A549 (cell line): ENCODE measurements at regions of chr22 and their contacts with region 1.

Region 1: DNA sequence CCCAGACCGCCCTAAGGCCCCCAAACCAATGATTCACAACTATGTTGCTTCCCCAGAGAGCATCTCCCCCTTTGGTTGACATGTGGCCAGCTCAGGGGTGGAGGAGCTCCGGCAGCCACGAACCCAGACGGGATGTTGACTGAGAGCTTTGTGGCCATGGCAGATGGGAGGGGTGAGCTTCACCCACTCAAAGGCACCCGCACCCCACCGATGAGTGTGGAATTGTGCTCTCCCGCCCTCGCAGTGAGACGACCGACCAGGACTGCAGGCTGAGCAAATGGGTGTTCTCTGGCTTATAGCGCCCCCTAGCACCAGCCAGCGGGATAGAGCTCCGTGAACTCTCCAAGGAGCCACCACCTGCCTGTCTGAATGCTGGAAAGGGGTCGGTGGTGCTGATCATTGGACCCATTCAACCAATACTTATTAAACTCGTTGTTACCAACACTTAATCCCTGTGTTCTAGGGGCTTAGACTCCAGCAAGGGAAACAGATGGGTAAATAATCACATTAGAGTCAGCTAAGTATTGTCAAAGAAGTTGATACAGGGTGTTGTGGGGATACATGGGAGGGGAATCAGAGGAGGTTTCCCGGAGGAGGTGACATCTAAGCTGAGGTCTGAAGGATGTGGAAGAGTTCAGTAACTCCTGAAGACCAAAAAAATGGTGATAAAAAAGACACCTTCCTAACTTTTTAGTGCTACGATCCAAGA is 4.5 kb upstream of the TIMP3 start:
- DNase-seq: peak; percentile 21 to 35
- ATAC-seq: peak; percentile 62 to 91; a peak in 4 of 6 replicates
- H3K4me3 ChIP-seq: no peak overlapping the region
- H3K27ac ChIP-seq: no peak overlapping the region
- H3K4me1 ChIP-seq: no peaks in the 10 kb centered on the region
- CTCF ChIP-seq: peak; percentile 49
- EP300 ChIP-seq: no peak
- POLR2A ChIP-seq: no peak
- RAD21 ChIP-seq: peak; percentile 73 to 82

Region 2: GRCh38 chr22:32375678-32376450 is 421.2 kb before region 1 on chr22:
- CTCF ChIA-PET with region 1: no interaction called
- POLR2A ChIA-PET with region 1: no interaction called
- DNase-seq: no peak
- ATAC-seq: no peak
- H3K4me3 ChIP-seq: no peak overlapping the region
- H3K27ac ChIP-seq: no peak overlapping the region
- H3K4me1 ChIP-seq: no peaks in the 10 kb centered on the region
- CTCF ChIP-seq: no peak
- EP300 ChIP-seq: no peak
- POLR2A ChIP-seq: no peak
- RAD21 ChIP-seq: no peak

Region 3: DNA sequence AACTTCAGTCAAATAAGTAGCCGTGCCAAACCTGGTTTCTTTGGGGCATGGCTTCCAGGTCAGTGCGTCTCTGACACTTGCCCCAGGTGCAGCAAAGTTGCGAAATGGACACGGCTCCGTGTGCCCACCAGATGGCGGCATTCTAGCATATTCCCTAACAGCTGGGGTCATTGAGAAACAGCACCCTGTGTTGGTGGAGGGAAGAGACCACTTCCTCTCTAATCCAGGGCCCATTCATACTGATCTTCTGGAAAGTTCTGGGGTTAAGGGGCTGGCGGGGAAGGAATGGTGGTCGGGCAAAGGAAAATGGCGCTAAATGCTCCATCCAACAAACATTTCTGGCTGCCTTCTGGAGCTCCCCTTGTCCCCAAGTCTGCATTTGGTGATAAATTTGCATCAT is 136.7 kb before region 1 on chr22:
- CTCF ChIA-PET with region 1: interaction called, 44 read pairs
- POLR2A ChIA-PET with region 1: no interaction called
- DNase-seq: peak; percentile 47 to 49
- ATAC-seq: peak; percentile 71 to 77; a peak in 4 of 6 replicates
- H3K4me3 ChIP-seq: no peak overlapping the region
- H3K27ac ChIP-seq: no peak overlapping the region
- H3K4me1 ChIP-seq: no peaks in the 10 kb centered on the region
- CTCF ChIP-seq: peak; percentile 49
- EP300 ChIP-seq: no peak
- POLR2A ChIP-seq: no peak
- RAD21 ChIP-seq: peak; percentile 64 to 73

Region 4: GRCh38 chr22:32810561-32811004 is 13.6 kb after region 1 on chr22:
- CTCF ChIA-PET with region 1: interaction called, 26 read pairs
- POLR2A ChIA-PET with region 1: no interaction called
- DNase-seq: no peak
- ATAC-seq: no peak
- H3K4me3 ChIP-seq: no peak overlapping the region
- H3K27ac ChIP-seq: no peak overlapping the region
- H3K4me1 ChIP-seq: no peaks in the 10 kb centered on the region
- CTCF ChIP-seq: no peak
- EP300 ChIP-seq: no peak
- POLR2A ChIP-seq: no peak
- RAD21 ChIP-seq: no peak

Region 5: GRCh38 chr22:32852395-32853251 is 55.6 kb after region 1 on chr22:
- CTCF ChIA-PET with region 1: no interaction called
- POLR2A ChIA-PET with region 1: no interaction called
- DNase-seq: no peak
- ATAC-seq: no peak
- H3K4me3 ChIP-seq: no peak overlapping the region
- H3K27ac ChIP-seq: no peak overlapping the region
- H3K4me1 ChIP-seq: no peaks in the 10 kb centered on the region
- CTCF ChIP-seq: no peak
- EP300 ChIP-seq: no peak
- POLR2A ChIP-seq: no peak
- RAD21 ChIP-seq: no peak

Region 6: DNA sequence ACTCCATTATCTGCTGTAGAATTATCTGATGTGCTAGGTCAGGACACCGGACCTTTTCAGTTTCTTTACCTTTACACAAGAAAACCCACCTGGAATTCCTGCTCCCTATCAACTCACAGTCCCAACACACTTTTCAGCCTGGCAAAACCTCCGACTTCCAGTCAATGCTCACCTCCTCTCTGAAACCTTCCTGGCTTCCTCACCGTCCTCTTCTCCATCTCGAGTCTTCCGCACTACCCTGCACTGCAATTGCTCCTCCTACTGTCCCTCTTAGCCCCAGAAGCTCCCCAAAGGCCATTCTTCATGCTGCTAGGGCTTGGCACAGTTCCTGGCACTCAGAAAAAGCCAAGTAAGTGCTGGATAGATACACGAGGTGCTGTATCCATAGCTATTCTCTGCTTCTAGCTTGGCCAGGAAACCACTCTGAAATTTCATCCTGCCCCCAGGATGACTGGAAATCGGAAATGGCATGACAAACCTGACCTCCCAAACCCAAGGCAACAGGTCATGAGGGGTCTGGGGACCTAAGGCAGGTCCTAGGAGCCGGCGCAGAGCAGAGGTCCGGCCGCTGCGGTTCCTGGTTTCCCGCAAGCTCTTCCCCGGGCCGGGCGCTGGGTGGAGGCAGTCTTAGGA is 260.5 kb after region 1 on chr22:
- CTCF ChIA-PET with region 1: no interaction called
- POLR2A ChIA-PET with region 1: no interaction called
- DNase-seq: no peak
- ATAC-seq: peak in 1 of 2 experiments; percentile 80; a peak in 4 of 6 replicates
- H3K4me3 ChIP-seq: peak overlapping the region; percentile 46
- H3K27ac ChIP-seq: peak overlapping the region in 1 of 2 experiments; percentile 33; a peak in 2 of 6 replicates
- H3K4me1 ChIP-seq: peaks cover 3% of the 10 kb centered on the region; the same call in 1 of the 3 replicates
- CTCF ChIP-seq: no peak
- EP300 ChIP-seq: no peak
- POLR2A ChIP-seq: no peak
- RAD21 ChIP-seq: no peak